CD4-positive, alpha-beta T cell (primary cell): ENCODE measurements at regions of chr16 and their contacts with region 1.

Region 1: DNA sequence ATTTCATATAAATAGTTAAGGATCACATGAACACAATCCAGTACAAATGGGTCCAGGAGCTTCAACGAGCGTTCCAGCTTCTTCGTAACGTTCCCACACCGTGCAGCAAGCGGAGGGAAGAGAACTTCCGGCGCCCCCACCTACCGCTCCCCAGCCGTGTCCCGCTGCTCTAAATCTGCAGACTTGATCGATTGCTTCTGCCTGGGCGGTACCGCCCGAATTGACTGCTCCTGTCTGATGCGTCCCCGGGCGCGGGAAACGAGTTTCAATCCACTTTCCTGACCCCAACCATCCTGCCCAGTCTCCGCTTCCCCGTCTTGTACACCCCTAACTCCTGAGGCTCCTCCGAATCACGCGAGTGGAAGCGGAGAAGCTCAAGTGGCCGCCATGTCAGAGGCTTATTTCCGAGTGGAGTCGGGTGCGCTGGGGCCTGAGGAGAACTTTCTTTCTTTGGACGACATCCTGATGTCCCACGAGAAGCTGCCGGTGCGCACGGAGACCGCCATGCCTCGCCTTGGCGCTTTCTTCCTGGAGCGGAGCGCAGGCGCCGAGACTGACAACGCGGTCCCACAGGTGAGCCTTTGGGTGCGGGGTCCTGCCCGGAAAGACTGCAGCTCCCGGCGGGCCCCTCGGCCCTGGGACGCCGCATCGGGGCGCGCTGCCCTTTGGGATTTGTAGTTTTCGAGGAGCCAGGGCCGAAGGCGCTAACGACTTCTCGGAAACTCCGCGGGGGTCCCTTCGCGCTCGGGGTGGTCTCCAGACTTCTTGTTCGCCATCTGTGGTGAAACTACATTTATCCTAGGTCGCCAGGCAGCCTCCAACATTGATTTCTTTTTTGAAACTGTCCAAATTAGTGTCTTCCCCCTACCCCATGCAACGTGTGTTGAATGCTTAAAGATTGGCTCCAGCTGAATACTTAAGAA is at the start of gene GINS3:
- DNase-seq: peak; percentile 66 to 91 (median 78)
- ATAC-seq: peak; percentile 97
- H3K4me3 ChIP-seq: peak within 1 kb of the TSS; percentile 100
- H3K4me3 Mint-ChIP-seq: peak within 1 kb of the TSS; percentile 100
- H3K27ac ChIP-seq: peak within 1 kb of the TSS; percentile 62 to 89
- H3K27ac Mint-ChIP-seq: peak within 1 kb of the TSS; percentile 92
- H3K4me1 ChIP-seq: peaks cover 12% of the 10 kb centered on the region
- H3K4me1 Mint-ChIP-seq: peaks cover 17% of the 10 kb centered on the region
- H3K27me3 ChIP-seq: no peaks in the 10 kb centered on the region
- H3K27me3 Mint-ChIP-seq: no peaks in the 10 kb centered on the region
- CTCF ChIP-seq: no peak
- total RNA-seq, gene GINS3: 0.27 to 0.36 TPM

Region 2: DNA sequence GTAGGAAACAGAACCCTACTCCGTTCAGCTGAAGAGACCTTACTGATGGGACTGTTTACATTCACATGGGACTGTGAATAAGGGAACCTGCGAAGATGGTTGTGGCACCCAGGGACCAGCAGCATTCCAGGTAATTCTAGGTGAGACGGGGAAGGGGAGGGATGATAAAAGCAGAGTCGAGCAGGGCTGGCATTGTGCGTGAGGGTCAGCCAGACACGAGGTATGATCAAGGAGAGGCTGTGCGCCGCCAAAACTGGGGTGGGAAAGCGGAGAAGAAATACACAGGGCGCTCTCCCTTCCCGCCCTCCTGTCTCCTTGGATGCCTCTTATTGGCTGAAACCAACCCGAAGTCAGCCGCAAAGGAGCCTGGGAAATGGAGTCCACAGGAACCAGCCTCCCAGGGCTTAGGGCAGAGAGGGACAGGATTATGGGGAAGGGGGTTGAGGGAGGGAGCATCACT is 156.2 kb before region 1 on chr16:
- CTCF ChIA-PET with region 1: no interaction called
- POLR2A ChIA-PET with region 1: no interaction called
- intact Hi-C with region 1: loop called in 1 of 2 experiments (anchors 5 kb)
- DNase-seq: peak; percentile 30 to 77 (median 58)
- ATAC-seq: peak; percentile 95
- H3K4me3 ChIP-seq: peak overlapping the region; percentile 60
- H3K4me3 Mint-ChIP-seq: peak overlapping the region; percentile 79
- H3K27ac ChIP-seq: no peak overlapping the region
- H3K27ac Mint-ChIP-seq: no peak overlapping the region
- H3K4me1 ChIP-seq: peaks cover 10% of the 10 kb centered on the region
- H3K4me1 Mint-ChIP-seq: peaks cover 7% of the 10 kb centered on the region
- H3K27me3 ChIP-seq: peaks cover 0 to 5% of the 10 kb centered on the region in 2 experiments
- H3K27me3 Mint-ChIP-seq: peaks cover 20% of the 10 kb centered on the region
- CTCF ChIP-seq: no peak

Region 3: DNA sequence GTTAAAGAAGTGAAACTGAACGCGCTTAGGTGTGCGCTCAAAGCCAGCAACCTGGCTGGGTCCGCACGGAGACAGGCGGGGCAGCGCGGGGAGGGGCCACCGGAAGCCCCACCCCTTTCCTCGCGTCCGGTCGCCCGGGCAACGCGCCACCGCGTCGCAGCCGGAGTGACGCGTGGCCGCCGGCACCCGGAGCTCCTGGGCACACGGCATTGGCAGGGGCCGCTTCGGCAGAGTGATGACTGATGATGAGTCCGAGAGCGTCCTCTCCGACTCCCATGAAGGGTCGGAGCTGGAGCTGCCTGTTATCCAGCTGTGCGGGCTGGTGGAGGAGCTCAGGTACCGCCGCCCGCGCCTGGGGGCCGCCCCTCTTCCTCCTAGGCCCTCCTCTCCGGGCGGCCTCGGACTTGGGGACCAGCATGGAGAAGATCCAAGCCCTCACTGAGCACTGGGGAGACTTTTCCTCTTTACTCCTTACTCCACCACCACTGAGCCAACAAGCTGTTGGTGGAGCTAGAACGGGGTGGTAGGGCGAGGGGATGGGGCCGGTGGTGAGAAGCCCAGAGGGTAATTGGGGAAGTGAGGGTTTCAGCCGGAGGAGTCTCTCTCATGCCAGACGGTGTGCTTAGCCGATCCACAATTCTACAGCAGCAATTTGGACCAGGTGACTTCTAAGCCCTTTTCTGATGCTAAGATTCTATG is 142.5 kb before region 1 on chr16:
- CTCF ChIA-PET with region 1: no interaction called
- POLR2A ChIA-PET with region 1: no interaction called
- intact Hi-C with region 1: loop called in 1 of 2 experiments (anchors 5 kb)
- DNase-seq: peak; percentile 65 to 94 (median 82)
- ATAC-seq: peak; percentile 98
- H3K4me3 ChIP-seq: peak overlapping the region; percentile 73
- H3K4me3 Mint-ChIP-seq: peak overlapping the region; percentile 84
- H3K27ac ChIP-seq: no peak overlapping the region
- H3K27ac Mint-ChIP-seq: no peak overlapping the region
- H3K4me1 ChIP-seq: peaks cover 16% of the 10 kb centered on the region
- H3K4me1 Mint-ChIP-seq: peaks cover 14% of the 10 kb centered on the region
- H3K27me3 ChIP-seq: no peaks in the 10 kb centered on the region
- H3K27me3 Mint-ChIP-seq: peaks cover 8% of the 10 kb centered on the region
- CTCF ChIP-seq: no peak

Region 4: GRCh38 chr16:58515125-58515870 is 122.8 kb after region 1 on chr16 and contains the start of gene SETD6:
- CTCF ChIA-PET with region 1: interaction called, 5 read pairs
- POLR2A ChIA-PET with region 1: no interaction called
- intact Hi-C with region 1: loop called in 1 of 2 experiments (anchors 5 kb)
- DNase-seq: peak in 13 of 14 experiments; percentile 31 to 80 (median 65)
- ATAC-seq: peak; percentile 53
- H3K4me3 ChIP-seq: peak within 1 kb of the TSS; percentile 75
- H3K4me3 Mint-ChIP-seq: peak within 1 kb of the TSS; percentile 90
- H3K27ac ChIP-seq: peak within 1 kb of the TSS; percentile 66 to 72
- H3K27ac Mint-ChIP-seq: peak within 1 kb of the TSS; percentile 90
- H3K4me1 ChIP-seq: peaks cover 21% of the 10 kb centered on the region
- H3K4me1 Mint-ChIP-seq: peaks cover 38% of the 10 kb centered on the region
- H3K27me3 ChIP-seq: no peaks in the 10 kb centered on the region
- H3K27me3 Mint-ChIP-seq: no peaks in the 10 kb centered on the region
- CTCF ChIP-seq: no peak
- total RNA-seq, gene SETD6: 21.9 to 25.5 TPM

Region 5: DNA sequence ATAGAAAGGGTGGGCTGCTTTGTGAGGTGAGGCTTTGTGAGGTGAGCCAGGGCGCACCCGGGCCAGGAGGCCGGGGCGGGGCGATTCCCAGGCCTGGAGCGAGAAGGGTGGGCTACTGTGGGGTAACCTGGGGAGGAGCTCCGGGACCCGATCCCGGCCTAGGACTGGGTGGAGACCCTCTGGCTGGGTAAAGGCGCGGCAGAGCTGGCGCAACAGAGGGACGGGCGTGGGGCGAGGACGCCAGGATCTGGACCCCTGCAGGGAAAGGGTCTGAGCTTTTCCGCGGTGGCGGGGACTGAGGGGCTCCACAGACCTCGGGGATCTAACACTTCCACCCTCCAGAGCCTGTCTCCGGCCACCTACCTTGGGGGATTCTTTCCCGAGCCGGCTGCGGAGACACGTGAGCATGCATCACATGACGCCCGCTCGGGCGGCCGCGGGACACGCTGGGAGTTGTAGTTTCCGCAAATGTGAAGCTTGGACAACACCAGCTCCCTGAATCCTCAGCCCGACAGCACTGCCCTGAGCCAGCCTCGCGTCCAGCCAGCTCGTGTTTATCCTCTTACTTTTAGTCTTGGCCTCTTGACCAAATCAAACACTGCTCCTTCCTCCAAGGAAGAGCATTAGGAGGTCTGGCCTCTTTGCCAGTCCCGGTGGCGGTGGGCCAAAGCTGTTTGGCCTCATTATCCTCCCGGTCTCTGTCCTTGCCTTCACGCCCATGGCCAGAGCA is 292.0 kb after region 1 on chr16 and contains the start of gene SLC38A7:
- CTCF ChIA-PET with region 1: no interaction called
- POLR2A ChIA-PET with region 1: no interaction called
- intact Hi-C with region 1: loop called in 1 of 2 experiments (anchors 2 kb)
- DNase-seq: peak; percentile 50 to 84 (median 64)
- ATAC-seq: peak; percentile 90
- H3K4me3 ChIP-seq: peak within 1 kb of the TSS; percentile 77
- H3K4me3 Mint-ChIP-seq: peak within 1 kb of the TSS; percentile 91
- H3K27ac ChIP-seq: peak within 1 kb of the TSS; percentile 13 to 18
- H3K27ac Mint-ChIP-seq: peak within 1 kb of the TSS; percentile 31
- H3K4me1 ChIP-seq: peaks cover 19% of the 10 kb centered on the region
- H3K4me1 Mint-ChIP-seq: peaks cover 20% of the 10 kb centered on the region
- H3K27me3 ChIP-seq: no peaks in the 10 kb centered on the region
- H3K27me3 Mint-ChIP-seq: no peaks in the 10 kb centered on the region
- CTCF ChIP-seq: no peak
- total RNA-seq, gene SLC38A7: 5.3 to 5.6 TPM